IMR-90 (cell line): ENCODE measurements at regions of chr15 and their contacts with region 1.

Region 1: GRCh38 chr15:25362545-25362944 is 76.3 kb downstream of the UBE3A start:
- DNase-seq: no peak
- ATAC-seq: no peak
- H3K4me3 ChIP-seq: no peak overlapping the region
- H3K27ac ChIP-seq: no peak overlapping the region
- H3K4me1 ChIP-seq: no peaks in the 10 kb centered on the region
- H3K27me3 ChIP-seq: no peaks in the 10 kb centered on the region
- CTCF ChIP-seq: no peak
- POLR2A ChIP-seq: no peak
- RAD21 ChIP-seq: no peak

Region 2: DNA sequence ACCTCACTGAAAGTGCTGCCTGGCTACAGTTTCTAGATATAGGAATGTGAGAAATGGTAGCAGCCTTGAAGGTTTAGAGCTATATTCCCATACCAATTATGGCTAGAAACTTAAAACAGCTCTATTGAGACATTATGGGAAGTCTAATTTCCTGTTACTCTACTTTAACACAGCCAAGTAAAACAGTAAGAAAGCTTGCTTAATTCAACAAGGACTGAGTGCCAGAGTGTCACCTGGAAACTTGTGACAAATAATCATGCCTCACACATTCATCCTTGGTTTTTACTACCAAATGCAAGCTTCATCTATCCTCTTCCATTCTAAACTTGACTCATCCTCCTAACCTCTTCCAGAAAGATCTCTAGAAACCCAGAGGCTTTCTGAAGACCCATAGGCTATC is 34.6 kb after region 1 on chr15:
- CTCF ChIA-PET with region 1: no interaction called
- POLR2A ChIA-PET with region 1: no interaction called
- dilution Hi-C with region 1: no loop called
- in situ Hi-C with region 1: loop called (anchors 5 kb)
- intact Hi-C with region 1: no loop called
- DNase-seq: no peak
- ATAC-seq: no peak
- H3K4me3 ChIP-seq: no peak overlapping the region
- H3K27ac ChIP-seq: no peak overlapping the region
- H3K4me1 ChIP-seq: peaks cover 2% of the 10 kb centered on the region; the same call in 1 of the 2 replicates
- H3K27me3 ChIP-seq: no peaks in the 10 kb centered on the region
- CTCF ChIP-seq: no peak
- POLR2A ChIP-seq: no peak
- RAD21 ChIP-seq: no peak

Region 3: GRCh38 chr15:25508369-25509002 is 145.9 kb after region 1 on chr15:
- CTCF ChIA-PET with region 1: no interaction called
- POLR2A ChIA-PET with region 1: no interaction called
- dilution Hi-C with region 1: no loop called
- in situ Hi-C with region 1: no loop called
- intact Hi-C with region 1: no loop called
- DNase-seq: peak; percentile 64
- ATAC-seq: peak; percentile 65; the same call in 1 of the 2 replicates
- H3K4me3 ChIP-seq: no peak overlapping the region
- H3K27ac ChIP-seq: no peak overlapping the region
- H3K4me1 ChIP-seq: peaks cover 3% of the 10 kb centered on the region; the same call in 1 of the 2 replicates
- H3K27me3 ChIP-seq: no peaks in the 10 kb centered on the region
- CTCF ChIP-seq: peak; percentile 86
- POLR2A ChIP-seq: 0 out of 2 replicates have a peak, but pooled peaks have one; percentile 32
- RAD21 ChIP-seq: peak; percentile 92